Calu3 (cell line): ENCODE measurements at regions of chr3 and their contacts with region 1.

Region 1: GRCh38 chr3:192467230-192468140 is 259.9 kb downstream of the FGF12 start:
- DNase-seq: peak; percentile 81
- H3K4me3 Mint-ChIP-seq: no peak overlapping the region
- H3K27ac Mint-ChIP-seq: no peak overlapping the region
- H3K4me1 Mint-ChIP-seq: no peaks in the 10 kb centered on the region
- H3K27me3 Mint-ChIP-seq: peaks cover 32% of the 10 kb centered on the region
- CTCF ChIP-seq: peak; percentile 96

Region 2: GRCh38 chr3:192372616-192373015 is 94.9 kb before region 1 on chr3:
- CTCF ChIA-PET with region 1: no interaction called
- intact Hi-C with region 1: no loop called
- DNase-seq: no peak
- H3K4me3 Mint-ChIP-seq: no peak overlapping the region
- H3K27ac Mint-ChIP-seq: no peak overlapping the region
- H3K4me1 Mint-ChIP-seq: no peaks in the 10 kb centered on the region
- H3K27me3 Mint-ChIP-seq: no peaks in the 10 kb centered on the region
- CTCF ChIP-seq: no peak

Region 3: DNA sequence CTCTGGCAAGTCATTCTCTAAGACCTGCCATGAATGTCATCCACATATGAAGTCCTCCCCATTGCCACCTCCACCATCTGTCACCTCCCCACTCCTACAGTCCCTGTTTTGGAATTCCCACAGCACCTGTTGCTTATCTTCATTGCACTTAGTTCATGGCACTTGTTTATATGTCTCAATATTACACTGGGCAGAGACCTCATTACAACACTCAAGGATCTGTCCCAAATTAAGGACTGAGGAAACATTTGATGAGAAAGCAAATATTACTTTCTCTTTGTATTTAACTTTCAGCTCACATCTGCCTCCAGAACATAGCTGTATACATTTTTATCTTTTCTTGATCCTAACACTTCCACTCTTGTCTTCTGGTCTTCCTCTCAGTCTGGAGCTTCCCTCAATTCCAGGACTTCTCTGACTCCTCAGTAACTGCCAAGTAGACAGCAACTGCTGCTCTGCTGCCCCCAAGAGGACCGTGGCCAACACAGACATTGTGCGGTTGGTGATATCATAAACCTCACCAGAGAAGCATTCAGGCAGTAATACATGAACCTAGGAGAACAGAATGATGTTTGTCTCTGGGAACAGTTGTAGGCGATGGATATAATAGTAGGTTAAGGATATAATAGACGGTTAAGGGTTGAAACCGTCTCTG is 304.9 kb after region 1 on chr3:
- CTCF ChIA-PET with region 1: no interaction called
- intact Hi-C with region 1: loop called (anchors 1 kb)
- DNase-seq: peak; percentile 71
- H3K4me3 Mint-ChIP-seq: no peak overlapping the region
- H3K27ac Mint-ChIP-seq: no peak overlapping the region
- H3K4me1 Mint-ChIP-seq: no peaks in the 10 kb centered on the region
- H3K27me3 Mint-ChIP-seq: peaks cover 35% of the 10 kb centered on the region
- CTCF ChIP-seq: peak; percentile 47

Region 4: DNA sequence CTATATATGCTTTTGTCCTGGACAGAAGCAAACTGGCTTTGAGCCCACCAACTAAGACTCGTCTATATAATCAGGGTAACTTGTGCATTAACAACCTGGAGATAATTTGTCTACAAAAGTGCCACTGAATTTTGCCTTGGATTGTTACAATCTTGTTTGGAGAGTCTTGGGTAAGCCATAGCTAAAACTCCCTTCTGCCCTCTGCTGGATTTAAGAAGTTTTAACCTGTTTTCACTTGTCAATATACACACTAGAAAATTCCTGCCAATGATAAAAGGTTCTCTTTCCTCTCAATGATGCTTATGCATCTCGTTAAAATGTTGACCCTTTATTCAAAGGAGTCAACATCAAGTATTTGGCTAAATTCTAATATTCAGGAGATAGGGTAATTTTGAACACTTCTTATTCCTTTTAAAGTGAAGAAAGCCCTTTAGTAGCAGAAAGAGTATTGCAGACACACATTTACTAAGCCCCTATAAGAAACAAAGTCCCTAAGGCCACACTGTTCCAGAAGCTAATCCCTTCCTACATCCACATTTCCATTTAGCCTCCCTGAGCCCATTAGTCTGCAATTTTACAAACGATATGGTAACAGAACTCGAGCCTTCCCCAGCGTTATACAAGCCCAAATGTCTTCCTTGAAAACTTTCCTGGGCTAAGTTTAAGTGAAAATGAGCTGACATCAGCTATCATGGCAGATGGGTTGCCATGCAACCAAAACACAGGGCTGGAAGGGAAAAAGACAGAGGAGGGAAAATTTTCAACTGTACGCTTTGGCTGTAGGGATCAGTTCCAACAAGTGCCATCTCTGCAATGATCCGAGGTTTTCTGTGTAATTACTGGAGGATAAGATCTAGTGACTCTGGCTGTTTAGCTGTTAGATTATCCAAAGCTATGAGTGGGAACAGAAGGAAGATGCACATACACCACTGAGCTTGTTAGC is 335.7 kb after region 1 on chr3:
- CTCF ChIA-PET with region 1: no interaction called
- intact Hi-C with region 1: loop called (anchors 1 kb)
- DNase-seq: no peak
- H3K4me3 Mint-ChIP-seq: no peak overlapping the region
- H3K27ac Mint-ChIP-seq: no peak overlapping the region
- H3K4me1 Mint-ChIP-seq: no peaks in the 10 kb centered on the region
- H3K27me3 Mint-ChIP-seq: no peaks in the 10 kb centered on the region
- CTCF ChIP-seq: peak; percentile 60